ENCODE measurements at regions of chr12 and their contacts with region 1.

Region 1: DNA sequence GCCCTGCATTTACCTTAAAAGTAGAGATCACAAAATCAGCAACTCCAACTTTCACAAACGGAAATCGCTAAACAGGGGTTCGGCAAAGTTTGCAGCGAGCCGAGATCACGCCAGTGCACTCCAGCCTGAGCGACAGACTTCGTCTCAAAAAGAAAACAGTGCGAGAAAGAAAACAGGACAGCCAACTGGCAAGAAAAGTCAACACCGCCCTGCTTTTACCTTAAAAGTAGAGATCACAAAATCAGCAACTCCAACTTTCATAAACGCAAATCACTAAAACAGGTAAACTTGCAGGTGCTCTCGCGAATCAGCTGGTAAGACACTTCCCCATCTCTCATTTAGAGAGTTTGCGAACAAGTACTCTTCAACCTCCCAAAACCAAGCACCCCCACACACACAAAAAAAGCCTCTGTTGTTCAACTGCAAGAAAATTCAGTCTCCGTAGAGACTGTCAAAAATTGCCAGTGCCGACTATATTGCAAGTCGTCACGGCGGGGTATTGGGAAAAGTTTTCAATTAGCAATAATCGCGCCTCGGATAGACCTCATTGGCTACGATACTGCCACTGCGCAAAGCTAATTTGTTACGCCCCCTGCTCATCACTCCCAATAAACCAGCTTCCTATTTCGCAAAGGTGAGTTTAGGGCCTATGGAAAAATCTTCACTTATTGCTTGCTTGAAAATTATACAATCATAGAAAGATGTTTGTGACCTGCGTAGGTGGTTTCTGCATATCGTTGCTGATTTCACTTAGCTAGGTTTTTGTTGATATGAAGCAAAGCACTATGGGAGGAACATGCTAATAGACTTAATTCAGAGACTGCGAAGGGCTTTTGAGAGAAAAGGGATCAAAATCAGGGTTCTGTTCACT is at the start of gene RNU4-1:
- DNase-seq: peak; percentile 98
- H3K4me3 ChIP-seq: peak within 1 kb of the TSS; percentile 54
- H3K27ac ChIP-seq: peak within 1 kb of the TSS; percentile 100
- H3K4me1 ChIP-seq: peaks cover 11% of the 10 kb centered on the region
- H3K27me3 ChIP-seq: no peaks in the 10 kb centered on the region
- CTCF ChIP-seq: no peak
- total RNA-seq, gene RNU4-1: 1,130 and 1,293 TPM in 2 replicates

Region 2: GRCh38 chr12:120199595-120200306 is 93.1 kb before region 1 on chr12:
- CTCF ChIA-PET with region 1: no interaction called
- POLR2A ChIA-PET with region 1: interaction called, 27 read pairs
- intact Hi-C with region 1: no loop called
- DNase-seq: no peak
- H3K4me3 ChIP-seq: peak overlapping the region; percentile 97
- H3K27ac ChIP-seq: peak overlapping the region; percentile 95
- H3K4me1 ChIP-seq: peaks cover 22% of the 10 kb centered on the region
- H3K27me3 ChIP-seq: no peaks in the 10 kb centered on the region
- CTCF ChIP-seq: no peak

Region 3: DNA sequence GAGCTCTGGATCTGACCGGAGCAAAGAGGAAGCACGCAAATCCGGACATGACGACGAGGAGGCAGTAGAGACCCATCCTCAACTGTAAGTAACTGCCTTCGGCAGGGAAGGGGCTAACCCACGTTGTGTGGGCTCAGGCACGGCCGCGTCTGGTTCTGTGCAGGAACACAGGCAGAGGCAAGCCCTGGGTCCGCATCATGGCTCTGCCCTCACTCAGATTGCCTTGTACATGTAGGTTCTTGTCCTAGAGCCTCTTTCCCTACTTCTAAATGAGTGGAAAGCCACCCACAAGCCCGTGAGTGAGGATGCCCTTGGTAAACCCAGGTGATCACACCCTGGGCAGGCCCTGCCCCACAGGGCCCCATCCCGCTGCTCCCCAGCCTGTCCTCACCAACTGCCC is 83.0 kb before region 1 on chr12:
- CTCF ChIA-PET with region 1: no interaction called
- POLR2A ChIA-PET with region 1: interaction called, 13 read pairs
- intact Hi-C with region 1: no loop called
- DNase-seq: no peak
- H3K4me3 ChIP-seq: no peak overlapping the region
- H3K27ac ChIP-seq: no peak overlapping the region
- H3K4me1 ChIP-seq: no peaks in the 10 kb centered on the region
- H3K27me3 ChIP-seq: no peaks in the 10 kb centered on the region
- CTCF ChIP-seq: no peak

Region 4: GRCh38 chr12:120317224-120318105 is 24.6 kb after region 1 on chr12:
- CTCF ChIA-PET with region 1: no interaction called
- POLR2A ChIA-PET with region 1: interaction called, 4 read pairs
- intact Hi-C with region 1: loop called (anchors 1 kb)
- DNase-seq: peak; percentile 100
- H3K4me3 ChIP-seq: peak overlapping the region; percentile 50
- H3K27ac ChIP-seq: peak overlapping the region; percentile 61
- H3K4me1 ChIP-seq: peaks cover 4% of the 10 kb centered on the region
- H3K27me3 ChIP-seq: no peaks in the 10 kb centered on the region
- CTCF ChIP-seq: peak; percentile 77

Region 5: DNA sequence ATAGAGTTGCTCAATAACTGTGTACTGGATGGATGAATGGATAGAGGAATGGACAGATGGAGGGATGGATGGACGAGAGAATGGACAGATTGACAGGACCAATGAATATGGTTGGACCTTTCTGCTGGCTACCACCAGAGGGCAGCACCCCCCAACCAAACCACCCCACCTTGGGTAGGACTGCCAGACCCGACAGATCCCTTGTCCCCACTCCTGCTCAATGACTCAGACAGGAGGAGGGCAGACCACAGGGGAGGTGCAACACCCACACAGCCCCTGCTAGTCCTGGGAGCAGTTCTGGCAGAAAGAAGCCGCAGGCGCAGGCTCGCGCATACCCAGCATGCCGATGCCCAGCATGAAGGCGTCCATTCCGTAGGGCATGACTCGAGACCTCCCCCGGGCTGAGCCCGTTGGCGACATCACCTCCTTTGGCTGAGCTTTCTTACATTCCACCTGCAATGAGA is 63.7 kb after region 1 on chr12:
- CTCF ChIA-PET with region 1: no interaction called
- POLR2A ChIA-PET with region 1: no interaction called
- intact Hi-C with region 1: no loop called
- DNase-seq: peak; percentile 91
- H3K4me3 ChIP-seq: peak overlapping the region; percentile 20
- H3K27ac ChIP-seq: no peak overlapping the region
- H3K4me1 ChIP-seq: peaks cover 5% of the 10 kb centered on the region
- H3K27me3 ChIP-seq: no peaks in the 10 kb centered on the region
- CTCF ChIP-seq: peak; percentile 92

Region 6: GRCh38 chr12:120686690-120687577 is 394.0 kb after region 1 on chr12 and contains the start of gene MLEC:
- CTCF ChIA-PET with region 1: no interaction called
- POLR2A ChIA-PET with region 1: interaction called, 14 read pairs
- intact Hi-C with region 1: no loop called
- DNase-seq: peak; percentile 99
- H3K4me3 ChIP-seq: peak within 1 kb of the TSS; percentile 93
- H3K27ac ChIP-seq: peak within 1 kb of the TSS; percentile 98
- H3K4me1 ChIP-seq: peaks cover 24% of the 10 kb centered on the region
- H3K27me3 ChIP-seq: no peaks in the 10 kb centered on the region
- CTCF ChIP-seq: 0 out of 2 replicates have a peak, but pooled peaks have one; percentile 26
- total RNA-seq, gene MLEC: 145 and 176 TPM in 2 replicates